Gastrocnemius medialis (tissue), 4 donors: ENCODE measurements at regions of chr19 and their contacts with region 1.

Region 1: DNA sequence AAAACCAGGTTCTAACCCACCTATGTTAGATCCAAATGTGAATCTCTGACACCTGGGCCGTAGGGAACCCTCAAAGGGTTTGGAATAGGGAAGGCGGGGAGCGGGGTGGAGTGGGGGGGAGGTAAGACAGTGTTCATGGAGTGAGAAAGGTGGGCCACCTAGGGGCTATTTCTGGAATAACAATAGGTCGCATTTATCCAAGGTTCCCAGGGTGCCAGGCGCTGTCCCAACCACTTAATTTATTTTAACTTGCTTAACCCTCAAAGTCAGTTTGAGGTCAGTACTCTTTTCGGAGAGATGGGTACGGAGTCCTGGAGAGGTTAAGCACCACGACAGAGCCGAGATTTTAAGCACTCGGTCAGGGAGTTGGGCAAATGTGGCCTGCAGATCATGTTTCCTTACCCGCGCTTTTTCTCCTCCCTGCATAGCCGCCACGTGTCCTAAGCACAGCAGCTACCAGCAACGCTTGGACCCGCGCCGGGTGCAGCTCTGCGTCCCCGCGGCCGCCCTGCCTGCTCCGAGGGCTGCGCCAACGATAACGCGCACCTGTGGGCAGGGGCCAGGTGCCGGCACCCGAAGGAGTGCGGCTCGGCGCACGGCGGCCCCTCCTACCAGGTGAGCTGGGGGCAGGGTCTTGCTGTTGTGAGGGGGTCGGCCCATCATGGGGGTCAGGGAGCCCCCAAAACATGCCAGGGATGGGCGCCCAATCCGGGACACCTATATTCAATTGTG is 25.0 kb upstream of the FXYD3 start:
- DNase-seq: peak; percentile 52 to 72
- ATAC-seq: peak; percentile 94 to 96
- H3K4me3 ChIP-seq: peak overlapping the region in 3 of 4 donors; percentile 4 to 35 (median 23)
- H3K27ac ChIP-seq: peak overlapping the region; percentile 31 to 61 (median 49)
- H3K4me1 ChIP-seq: peaks cover 9 to 15% of the 10 kb centered on the region in 2 donors
- H3K27me3 ChIP-seq: no peaks in the 10 kb centered on the region
- CTCF ChIP-seq: peak; percentile 72 to 77 (median 75)
- POLR2A ChIP-seq: no peak

Region 2: GRCh38 chr19:34974646-34975045 is 116.0 kb before region 1 on chr19:
- in situ Hi-C with region 1: loop called in 2 of 4 experiments (anchors 10 kb)
- intact Hi-C with region 1: loop called (anchors 1 kb)
- DNase-seq: no peak
- ATAC-seq: no peak
- H3K4me3 ChIP-seq: no peak overlapping the region
- H3K27ac ChIP-seq: no peak overlapping the region
- H3K4me1 ChIP-seq: peaks cover 3 to 7% of the 10 kb centered on the region in 2 donors
- H3K27me3 ChIP-seq: no peaks in the 10 kb centered on the region
- CTCF ChIP-seq: no peak
- POLR2A ChIP-seq: no peak

Region 3: GRCh38 chr19:35044317-35045117 is 46.2 kb before region 1 on chr19:
- in situ Hi-C with region 1: loop called in 1 of 4 experiments (anchors 10 kb)
- intact Hi-C with region 1: loop called (anchors 1 kb)
- DNase-seq: peak in 1 of 2 donors; percentile 68
- ATAC-seq: no peak
- H3K4me3 ChIP-seq: no peak overlapping the region
- H3K27ac ChIP-seq: peak overlapping the region; percentile 97 to 98 (median 98)
- H3K4me1 ChIP-seq: peaks cover 59 to 63% of the 10 kb centered on the region in 2 donors
- H3K27me3 ChIP-seq: no peaks in the 10 kb centered on the region
- CTCF ChIP-seq: peak; percentile 96 to 98 (median 97)
- POLR2A ChIP-seq: no peak

Region 4: GRCh38 chr19:35135389-35135909 is 44.8 kb after region 1 on chr19:
- in situ Hi-C with region 1: no loop called
- intact Hi-C with region 1: loop called (anchors 2 kb)
- DNase-seq: peak; percentile 67 to 83
- ATAC-seq: peak; percentile 29 to 34
- H3K4me3 ChIP-seq: peak overlapping the region; percentile 46 to 53 (median 50)
- H3K27ac ChIP-seq: peak overlapping the region; percentile 99 to 100 (median 99)
- H3K4me1 ChIP-seq: peaks cover 33 to 38% of the 10 kb centered on the region in 2 donors
- H3K27me3 ChIP-seq: no peaks in the 10 kb centered on the region
- CTCF ChIP-seq: peak; percentile 94 to 98 (median 97)
- POLR2A ChIP-seq: no peak

Region 5: DNA sequence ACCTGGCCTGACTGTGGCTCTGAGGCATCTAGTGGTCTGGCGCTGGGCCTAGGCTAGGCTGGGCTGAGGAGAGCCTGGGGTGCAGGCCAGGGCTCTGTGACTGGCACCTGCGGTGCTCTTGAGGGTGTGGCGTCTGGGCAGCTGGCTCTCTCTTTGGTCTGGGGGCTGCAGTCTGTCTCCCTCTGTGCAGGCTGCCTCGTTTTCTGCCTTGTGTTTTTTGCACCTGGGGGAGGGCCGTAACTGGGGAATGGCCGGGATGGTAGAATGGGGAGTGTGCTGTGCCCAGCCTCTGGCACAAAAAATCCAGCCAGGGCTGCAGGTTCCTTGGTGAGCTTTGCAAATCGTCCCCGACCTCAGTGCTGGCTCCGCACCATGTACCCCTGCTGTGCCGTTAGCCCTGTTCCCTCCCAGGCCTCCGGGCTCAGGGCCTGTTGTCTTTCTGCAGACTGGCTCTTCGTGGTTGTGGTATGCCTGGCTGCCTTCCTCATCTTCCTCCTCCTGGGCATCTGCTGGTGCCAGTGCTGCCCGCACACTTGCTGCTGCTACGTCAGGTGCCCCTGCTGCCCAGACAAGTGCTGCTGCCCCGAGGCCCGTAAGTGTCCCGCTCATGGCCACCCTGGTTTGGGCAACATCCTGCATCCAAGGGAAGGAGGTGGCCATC is 171.6 kb after region 1 on chr19:
- in situ Hi-C with region 1: no loop called
- intact Hi-C with region 1: no loop called
- DNase-seq: no peak
- ATAC-seq: no peak
- H3K4me3 ChIP-seq: no peak overlapping the region
- H3K27ac ChIP-seq: no peak overlapping the region
- H3K4me1 ChIP-seq: peaks cover 11 to 30% of the 10 kb centered on the region in 2 donors
- H3K27me3 ChIP-seq: peaks cover 0 to 2% (median 2%) of the 10 kb centered on the region in 3 donors
- CTCF ChIP-seq: no peak
- POLR2A ChIP-seq: no peak